OCI-LY7 (cell line): ENCODE measurements at regions of chr17 and their contacts with region 1.

Region 1: GRCh38 chr17:50853015-50853615 is 13.0 kb downstream of the TOB1 start:
- DNase-seq: no peak
- H3K4me3 ChIP-seq: no peak overlapping the region
- H3K27ac ChIP-seq: no peak overlapping the region
- H3K4me1 ChIP-seq: peaks cover 13% of the 10 kb centered on the region
- CTCF ChIP-seq: no peak

Region 2: DNA sequence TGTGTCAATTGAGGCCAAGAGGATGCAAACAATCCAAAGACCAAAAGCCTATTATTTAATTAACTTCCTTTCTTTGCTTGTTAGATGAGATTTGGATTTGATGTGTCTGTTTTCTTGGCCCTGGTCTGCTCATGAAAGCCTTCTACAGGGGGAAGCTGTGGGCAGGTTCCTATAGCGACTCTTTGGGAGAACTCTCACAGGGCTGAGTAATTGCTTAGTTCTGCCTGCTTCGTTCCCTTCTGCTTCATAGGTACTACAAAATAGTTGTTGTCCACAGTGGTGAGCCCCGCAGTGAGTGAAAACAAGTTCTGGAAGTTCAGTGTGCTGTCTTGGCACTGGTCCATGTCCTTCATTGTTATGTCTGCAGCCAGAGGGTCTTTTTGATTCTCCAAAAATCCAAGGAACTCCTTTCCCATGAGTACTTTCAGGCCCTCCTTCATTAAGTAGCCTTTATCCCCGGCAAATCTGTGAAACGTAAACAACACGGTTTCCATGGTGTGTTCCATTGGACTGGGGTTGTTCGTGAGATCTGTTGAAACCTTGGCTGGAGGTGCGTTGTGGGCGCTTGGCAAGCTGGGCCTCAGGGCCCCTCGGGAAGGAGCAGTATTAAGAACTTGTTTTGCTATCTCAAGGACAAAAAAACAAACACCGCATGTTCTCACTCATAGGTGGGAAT is 55.8 kb before region 1 on chr17:
- CTCF ChIA-PET with region 1: no interaction called
- POLR2A ChIA-PET with region 1: no interaction called
- intact Hi-C with region 1: no loop called
- DNase-seq: no peak
- H3K4me3 ChIP-seq: no peak overlapping the region
- H3K27ac ChIP-seq: no peak overlapping the region
- H3K4me1 ChIP-seq: no peaks in the 10 kb centered on the region
- CTCF ChIP-seq: no peak

Region 3: GRCh38 chr17:50949989-50950881 is 97.1 kb after region 1 on chr17:
- CTCF ChIA-PET with region 1: interaction called, 10 read pairs
- POLR2A ChIA-PET with region 1: interaction called, 9 read pairs
- intact Hi-C with region 1: loop called (anchors 1 kb)
- DNase-seq: peak; percentile 70
- H3K4me3 ChIP-seq: no peak overlapping the region
- H3K27ac ChIP-seq: no peak overlapping the region
- H3K4me1 ChIP-seq: peaks cover 11% of the 10 kb centered on the region
- CTCF ChIP-seq: peak; percentile 89

Region 4: GRCh38 chr17:51120739-51121617 is 267.9 kb after region 1 on chr17 and contains the start of gene SPAG9:
- CTCF ChIA-PET with region 1: no interaction called
- POLR2A ChIA-PET with region 1: interaction called, 10 read pairs
- intact Hi-C with region 1: no loop called
- DNase-seq: peak; percentile 95
- H3K4me3 ChIP-seq: peak within 1 kb of the TSS; percentile 100
- H3K27ac ChIP-seq: peak within 1 kb of the TSS; percentile 87
- H3K4me1 ChIP-seq: peaks cover 38% of the 10 kb centered on the region
- CTCF ChIP-seq: no peak
- total RNA-seq, gene SPAG9: 61.1 and 78.9 TPM in 2 replicates